H1 (cell line): ENCODE measurements at regions of chr1 and their contacts with region 1.

Region 1: DNA sequence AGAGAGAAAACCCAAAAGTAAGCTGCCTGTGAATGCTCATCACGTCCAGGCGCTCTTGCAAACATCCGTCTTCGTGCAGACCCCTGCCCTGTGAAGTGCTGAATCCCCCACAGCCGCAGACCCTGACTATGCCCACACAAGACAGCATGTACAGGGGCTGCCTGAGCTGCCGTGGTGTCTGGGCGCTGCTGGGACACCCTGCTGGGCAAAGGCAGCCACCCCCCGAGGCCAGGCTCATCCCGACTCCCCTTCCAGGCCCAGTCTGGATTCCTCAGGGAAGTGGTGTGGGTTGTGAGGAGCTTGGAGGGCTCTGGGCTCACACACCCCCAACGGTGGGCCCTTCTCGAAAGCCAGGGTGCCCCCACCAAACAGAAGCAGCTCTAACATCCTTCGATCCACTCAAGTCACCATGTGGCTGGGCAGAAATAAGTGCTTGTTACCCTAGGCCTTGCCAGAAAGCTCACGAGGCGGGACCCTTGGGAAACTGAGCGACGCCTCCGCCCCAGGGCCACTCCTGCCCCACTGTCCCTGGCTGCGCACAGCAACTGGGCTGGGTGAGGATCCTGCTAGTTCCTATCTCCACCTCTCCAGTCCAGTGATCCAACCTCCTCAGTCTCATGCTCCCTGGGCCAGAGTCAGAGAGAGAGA is 4.8 kb upstream of the WNT9A start:
- DNase-seq: peak in 1 of 2 experiments; percentile 23
- H3K4me3 ChIP-seq: no peak overlapping the region
- H3K27ac ChIP-seq: no peak overlapping the region
- H3K4me1 ChIP-seq: peaks cover 0 to 10% (median 3%) of the 10 kb centered on the region in 4 experiments; a peak in 4 of 7 replicates
- H3K27me3 ChIP-seq: peaks cover 9 to 22% (median 18%) of the 10 kb centered on the region in 4 experiments
- CTCF ChIP-seq: no peak
- EP300 ChIP-seq: no peak
- POLR2A ChIP-seq: no peak
- RAD21 ChIP-seq: no peak

Region 2: GRCh38 chr1:227793948-227794816 is 158.3 kb before region 1 on chr1:
- CTCF ChIA-PET with region 1: interaction called, 13 read pairs
- POLR2A ChIA-PET with region 1: interaction called, 4 read pairs
- DNase-seq: peak; percentile 43 to 61
- H3K4me3 ChIP-seq: no peak overlapping the region
- H3K27ac ChIP-seq: no peak overlapping the region
- H3K4me1 ChIP-seq: peaks cover 0 to 25% (median 18%) of the 10 kb centered on the region in 4 experiments; a peak in 6 of 7 replicates
- H3K27me3 ChIP-seq: peaks cover 0 to 8% (median 3%) of the 10 kb centered on the region in 4 experiments; a peak in 5 of 7 replicates
- CTCF ChIP-seq: no peak
- EP300 ChIP-seq: no peak
- POLR2A ChIP-seq: no peak
- RAD21 ChIP-seq: peak in 1 of 2 experiments; percentile 23; a peak in 1 of 4 replicates